Activated CD4-positive, alpha-beta T cell treated with anti-CD3 and anti-CD28 coated beads for 36 hours (primary cell): ENCODE measurements at regions of chr3 and their contacts with region 1.

Region 1: DNA sequence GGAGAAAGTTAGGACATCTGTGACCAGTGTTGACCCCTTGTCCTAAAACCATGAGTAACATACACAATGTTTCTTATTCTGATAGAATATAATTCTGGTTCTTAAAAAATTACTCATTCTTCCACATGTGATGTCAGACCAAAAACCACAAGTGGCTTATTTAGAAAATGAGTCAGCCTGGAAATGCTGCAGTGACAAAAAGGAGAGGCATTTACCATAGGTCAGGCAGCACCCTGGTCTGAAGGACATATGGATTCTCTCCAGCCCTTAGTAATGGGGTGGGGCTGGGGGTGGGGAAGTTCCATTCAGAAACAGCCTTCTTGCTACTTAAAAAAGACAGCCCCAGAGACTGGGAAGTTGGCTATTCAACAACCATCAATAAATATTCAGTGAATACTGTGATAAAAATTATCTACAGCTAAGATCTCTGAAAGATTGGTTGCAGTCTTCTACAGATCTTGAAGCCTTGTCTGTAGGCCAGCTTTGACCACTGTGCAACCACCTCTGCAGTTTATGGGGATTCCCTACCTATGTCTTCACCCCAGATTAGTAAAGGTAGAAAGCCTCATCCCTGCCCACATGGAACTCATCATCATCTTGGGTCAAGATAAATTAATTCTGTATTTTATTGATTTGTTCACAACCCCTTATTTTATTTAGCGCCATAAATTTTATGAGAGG is 34.9 kb upstream of the TIMP4 start:
- DNase-seq: peak; percentile 63
- ATAC-seq: peak; percentile 60
- H3K4me3 Mint-ChIP-seq: peak overlapping the region; percentile 32
- H3K27ac Mint-ChIP-seq: peak overlapping the region; percentile 87
- H3K4me1 Mint-ChIP-seq: peaks cover 62% of the 10 kb centered on the region
- H3K27me3 Mint-ChIP-seq: peaks cover 4% of the 10 kb centered on the region

Region 2: DNA sequence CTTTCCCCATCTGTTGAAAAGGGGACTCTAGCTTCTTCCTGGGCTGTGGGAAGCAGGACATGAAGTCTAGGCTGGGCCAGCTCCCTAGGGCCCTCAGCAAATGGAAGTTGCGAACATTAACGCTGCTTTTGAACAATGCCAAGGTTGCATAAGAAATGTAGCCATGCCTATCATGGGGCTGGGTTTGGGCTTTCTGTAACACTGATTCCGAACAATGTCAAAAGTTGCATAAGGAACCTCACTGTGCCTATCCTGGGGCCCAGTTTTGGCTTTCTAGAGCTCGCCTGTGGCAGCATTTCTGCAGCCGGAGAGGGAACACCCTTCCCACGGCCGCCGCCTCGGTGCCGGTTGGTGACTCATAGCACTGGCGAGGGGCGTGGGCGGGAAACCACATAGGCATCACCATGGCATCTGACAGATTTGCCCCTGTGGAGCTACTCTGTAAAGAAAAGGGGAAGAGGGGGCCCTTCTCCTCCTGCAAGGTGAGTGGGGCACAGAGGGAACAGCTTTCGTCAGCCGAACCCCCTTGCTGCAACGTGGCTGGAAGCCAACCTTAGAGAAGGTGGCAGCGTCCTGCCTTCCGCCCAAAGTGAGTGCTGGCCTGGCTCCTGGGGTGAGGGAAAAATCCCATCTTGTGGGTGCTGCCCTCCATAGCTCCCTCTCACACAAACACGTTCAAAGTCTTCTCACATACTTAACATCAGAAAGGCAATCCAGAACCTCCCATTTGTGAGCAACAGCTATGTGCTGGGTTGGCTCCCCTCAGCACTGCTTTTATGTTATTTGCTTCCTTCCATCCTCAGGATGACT is 1641.6 kb before region 1 on chr3:
- CTCF ChIA-PET with region 1: no interaction called
- POLR2A ChIA-PET with region 1: no interaction called
- intact Hi-C with region 1: loop called in 1 of 2 experiments (anchors 5 kb)
- DNase-seq: peak; percentile 95
- ATAC-seq: peak; percentile 75
- H3K4me3 Mint-ChIP-seq: peak overlapping the region; percentile 31
- H3K27ac Mint-ChIP-seq: peak overlapping the region; percentile 83
- H3K4me1 Mint-ChIP-seq: peaks cover 39% of the 10 kb centered on the region
- H3K27me3 Mint-ChIP-seq: peaks cover 8% of the 10 kb centered on the region

Region 3: DNA sequence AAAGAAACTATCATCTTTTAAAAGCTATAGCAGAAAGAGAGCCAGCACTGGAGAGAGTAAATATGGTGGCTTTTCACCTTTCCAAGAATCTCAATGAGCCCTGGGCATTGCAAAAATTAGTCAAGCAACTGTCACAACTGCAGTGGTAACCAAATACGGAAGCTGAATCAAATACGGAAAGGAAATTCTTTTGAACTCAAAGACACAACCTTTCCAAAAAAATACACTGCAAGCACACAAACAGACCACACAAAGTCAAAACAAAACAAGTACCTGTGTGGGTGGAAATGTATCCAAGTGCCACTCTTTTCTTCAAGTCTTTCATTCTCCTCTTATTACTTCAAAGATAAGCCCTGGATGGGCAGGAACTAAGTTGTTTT is 567.6 kb before region 1 on chr3:
- CTCF ChIA-PET with region 1: no interaction called
- POLR2A ChIA-PET with region 1: no interaction called
- intact Hi-C with region 1: loop called in 1 of 2 experiments (anchors 2 kb)
- DNase-seq: peak; percentile 44
- ATAC-seq: peak; percentile 67
- H3K4me3 Mint-ChIP-seq: peak overlapping the region; percentile 26
- H3K27ac Mint-ChIP-seq: peak overlapping the region; percentile 66
- H3K4me1 Mint-ChIP-seq: peaks cover 67% of the 10 kb centered on the region
- H3K27me3 Mint-ChIP-seq: no peaks in the 10 kb centered on the region

Region 4: DNA sequence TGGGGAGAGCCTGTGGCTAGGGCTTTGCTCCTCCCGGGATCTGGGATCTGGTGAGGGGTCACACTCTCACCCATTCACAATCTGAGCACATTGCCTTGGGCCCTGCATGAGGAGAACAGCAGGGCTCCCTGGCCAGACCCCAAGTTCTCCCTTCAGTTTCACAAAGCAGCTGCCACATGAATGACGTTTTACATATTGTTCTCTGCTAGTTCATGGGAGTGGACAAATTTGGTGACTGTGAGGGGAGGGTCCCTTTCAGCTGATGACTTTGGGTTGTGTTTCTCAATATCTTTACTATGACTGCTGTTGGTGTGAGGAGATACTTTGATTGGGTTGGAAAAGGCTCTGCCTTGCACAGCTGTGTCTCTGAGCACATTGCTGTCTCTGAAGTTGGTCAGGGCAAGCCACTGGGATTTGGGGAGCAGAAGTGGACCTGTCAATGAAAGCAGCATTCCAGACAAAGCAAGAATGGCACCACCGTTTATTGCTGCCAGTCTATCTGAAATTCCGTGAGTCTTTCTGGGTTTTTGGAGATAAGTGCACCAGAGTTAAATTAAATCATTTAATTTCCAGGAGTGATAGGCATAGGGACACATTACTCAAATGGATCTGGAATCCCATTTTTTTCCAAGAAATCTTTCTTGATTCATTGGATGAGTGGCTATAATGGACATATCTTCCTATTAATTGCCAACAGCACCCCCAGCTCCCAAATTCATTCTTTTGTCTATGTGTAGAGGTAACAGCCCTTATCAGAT is 45.3 kb before region 1 on chr3:
- CTCF ChIA-PET with region 1: no interaction called
- POLR2A ChIA-PET with region 1: no interaction called
- intact Hi-C with region 1: no loop called
- DNase-seq: no peak
- ATAC-seq: no peak
- H3K4me3 Mint-ChIP-seq: no peak overlapping the region
- H3K27ac Mint-ChIP-seq: no peak overlapping the region
- H3K4me1 Mint-ChIP-seq: no peaks in the 10 kb centered on the region
- H3K27me3 Mint-ChIP-seq: peaks cover 2% of the 10 kb centered on the region

Region 5: DNA sequence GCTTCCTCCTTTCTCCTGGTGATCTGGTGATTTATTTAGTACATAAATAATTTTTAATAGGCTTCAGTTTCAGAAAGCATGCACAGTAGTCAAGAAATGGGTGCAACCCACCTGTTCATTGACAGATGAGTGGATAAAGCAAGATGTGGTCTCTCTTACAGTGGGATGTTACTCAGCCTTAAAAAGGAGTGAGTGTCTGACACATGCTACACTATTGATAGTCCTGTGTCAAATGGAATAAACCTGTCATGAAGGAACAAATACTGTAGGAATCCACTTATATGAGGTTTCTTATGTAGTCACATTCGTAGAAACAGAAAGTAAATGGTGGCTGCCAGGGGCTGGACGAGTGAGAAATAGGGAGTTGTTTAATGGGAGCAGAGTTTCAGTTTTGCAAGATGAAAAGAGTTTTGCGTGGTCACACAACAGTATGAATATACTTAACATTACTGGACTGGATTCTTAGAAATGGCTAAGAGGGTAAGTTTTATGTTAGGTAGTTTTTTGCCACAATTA is 39.2 kb after region 1 on chr3:
- CTCF ChIA-PET with region 1: no interaction called
- POLR2A ChIA-PET with region 1: no interaction called
- intact Hi-C with region 1: loop called in 1 of 2 experiments (anchors 2 kb)
- DNase-seq: peak; percentile 19
- ATAC-seq: peak; percentile 83
- H3K4me3 Mint-ChIP-seq: no peak overlapping the region
- H3K27ac Mint-ChIP-seq: no peak overlapping the region
- H3K4me1 Mint-ChIP-seq: peaks cover 20% of the 10 kb centered on the region
- H3K27me3 Mint-ChIP-seq: peaks cover 20% of the 10 kb centered on the region

Region 6: DNA sequence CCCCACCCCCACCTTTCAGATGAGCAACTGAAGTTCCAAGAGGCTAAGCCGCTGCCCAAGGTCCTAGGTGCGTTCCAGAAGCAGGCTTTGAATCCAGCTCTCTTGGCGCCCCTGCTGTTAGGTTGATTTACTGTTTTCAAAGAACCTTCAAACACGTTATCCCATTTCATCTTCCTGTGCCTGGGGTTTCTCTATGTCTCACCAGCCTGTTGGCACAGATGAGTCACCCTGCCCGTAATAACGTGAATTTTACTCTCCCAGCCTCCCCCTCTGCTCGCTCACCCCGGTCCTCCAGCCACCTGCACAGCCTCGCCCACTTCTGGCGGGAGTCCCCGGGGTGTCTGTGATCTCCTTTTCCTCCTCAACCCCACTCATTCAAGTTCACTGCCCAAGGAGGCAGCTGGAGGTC is 277.6 kb after region 1 on chr3:
- CTCF ChIA-PET with region 1: interaction called, 3 read pairs
- POLR2A ChIA-PET with region 1: interaction called, 3 read pairs
- intact Hi-C with region 1: loop called (anchors 1 kb)
- DNase-seq: peak; percentile 91
- ATAC-seq: peak; percentile 96
- H3K4me3 Mint-ChIP-seq: peak overlapping the region; percentile 12
- H3K27ac Mint-ChIP-seq: peak overlapping the region; percentile 81
- H3K4me1 Mint-ChIP-seq: peaks cover 36% of the 10 kb centered on the region
- H3K27me3 Mint-ChIP-seq: no peaks in the 10 kb centered on the region

Region 7: GRCh38 chr3:12536423-12536822 is 342.8 kb after region 1 on chr3:
- CTCF ChIA-PET with region 1: no interaction called
- POLR2A ChIA-PET with region 1: no interaction called
- intact Hi-C with region 1: no loop called
- DNase-seq: no peak
- ATAC-seq: no peak
- H3K4me3 Mint-ChIP-seq: no peak overlapping the region
- H3K27ac Mint-ChIP-seq: no peak overlapping the region
- H3K4me1 Mint-ChIP-seq: peaks cover 4% of the 10 kb centered on the region
- H3K27me3 Mint-ChIP-seq: no peaks in the 10 kb centered on the region